Activated naive CD4-positive, alpha-beta T cell treated with anti-CD3 and anti-CD28 coated beads for 36 hours (primary cell): ENCODE measurements at regions of chr14 and their contacts with region 1.

Region 1: DNA sequence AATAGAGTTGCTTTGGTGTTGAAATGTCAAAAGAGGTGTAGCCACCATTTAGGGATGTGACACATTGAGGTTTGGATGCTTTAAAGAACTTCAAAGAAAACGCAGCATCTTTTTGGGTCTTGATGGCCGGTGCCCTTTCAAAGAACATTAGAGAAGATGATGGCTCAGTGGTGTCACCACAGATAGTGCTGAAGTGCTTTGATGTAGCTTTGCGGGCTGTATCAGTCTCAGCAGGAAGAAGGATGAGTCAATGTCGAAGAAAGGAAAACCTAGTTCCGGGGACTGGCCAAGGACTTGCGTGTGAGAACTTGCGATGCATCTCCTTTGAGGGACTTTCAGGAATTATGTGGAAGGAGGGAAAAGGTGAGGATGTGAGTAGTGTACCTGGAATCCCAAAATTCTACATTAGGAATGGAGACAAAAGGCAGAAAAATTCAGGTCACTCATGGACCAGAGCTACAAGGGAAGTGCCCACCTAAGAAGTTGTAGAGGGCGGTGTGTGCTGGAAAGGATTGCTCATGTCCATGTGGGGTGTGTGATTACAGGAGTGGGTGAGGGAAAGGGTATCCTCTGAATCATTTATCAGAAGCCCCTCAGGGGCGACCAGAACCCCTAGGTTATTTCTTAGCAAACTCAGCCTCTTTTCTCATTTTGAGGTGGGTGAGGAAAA is 39.7 kb upstream of the GZMB start:
- DNase-seq: peak; percentile 87
- H3K4me3 Mint-ChIP-seq: peak overlapping the region; percentile 60
- H3K27ac Mint-ChIP-seq: peak overlapping the region; percentile 96
- H3K4me1 Mint-ChIP-seq: peaks cover 80% of the 10 kb centered on the region
- H3K27me3 Mint-ChIP-seq: no peaks in the 10 kb centered on the region

Region 2: GRCh38 chr14:24259252-24259995 is 414.2 kb before region 1 on chr14:
- CTCF ChIA-PET with region 1: no interaction called
- intact Hi-C with region 1: no loop called
- DNase-seq: no peak
- H3K4me3 Mint-ChIP-seq: no peak overlapping the region
- H3K27ac Mint-ChIP-seq: no peak overlapping the region
- H3K4me1 Mint-ChIP-seq: no peaks in the 10 kb centered on the region
- H3K27me3 Mint-ChIP-seq: no peaks in the 10 kb centered on the region

Region 3: GRCh38 chr14:24366721-24367513 is 306.8 kb before region 1 on chr14:
- CTCF ChIA-PET with region 1: no interaction called
- intact Hi-C with region 1: loop called (anchors 5 kb)
- DNase-seq: peak; percentile 31
- H3K4me3 Mint-ChIP-seq: peak overlapping the region; percentile 71
- H3K27ac Mint-ChIP-seq: no peak overlapping the region
- H3K4me1 Mint-ChIP-seq: peaks cover 29% of the 10 kb centered on the region
- H3K27me3 Mint-ChIP-seq: peaks cover 41% of the 10 kb centered on the region

Region 4: GRCh38 chr14:24463017-24463883 is 210.4 kb before region 1 on chr14:
- CTCF ChIA-PET with region 1: no interaction called
- intact Hi-C with region 1: loop called (anchors 1 kb)
- DNase-seq: no peak
- H3K4me3 Mint-ChIP-seq: no peak overlapping the region
- H3K27ac Mint-ChIP-seq: peak overlapping the region; percentile 67
- H3K4me1 Mint-ChIP-seq: peaks cover 35% of the 10 kb centered on the region
- H3K27me3 Mint-ChIP-seq: no peaks in the 10 kb centered on the region

Region 5: DNA sequence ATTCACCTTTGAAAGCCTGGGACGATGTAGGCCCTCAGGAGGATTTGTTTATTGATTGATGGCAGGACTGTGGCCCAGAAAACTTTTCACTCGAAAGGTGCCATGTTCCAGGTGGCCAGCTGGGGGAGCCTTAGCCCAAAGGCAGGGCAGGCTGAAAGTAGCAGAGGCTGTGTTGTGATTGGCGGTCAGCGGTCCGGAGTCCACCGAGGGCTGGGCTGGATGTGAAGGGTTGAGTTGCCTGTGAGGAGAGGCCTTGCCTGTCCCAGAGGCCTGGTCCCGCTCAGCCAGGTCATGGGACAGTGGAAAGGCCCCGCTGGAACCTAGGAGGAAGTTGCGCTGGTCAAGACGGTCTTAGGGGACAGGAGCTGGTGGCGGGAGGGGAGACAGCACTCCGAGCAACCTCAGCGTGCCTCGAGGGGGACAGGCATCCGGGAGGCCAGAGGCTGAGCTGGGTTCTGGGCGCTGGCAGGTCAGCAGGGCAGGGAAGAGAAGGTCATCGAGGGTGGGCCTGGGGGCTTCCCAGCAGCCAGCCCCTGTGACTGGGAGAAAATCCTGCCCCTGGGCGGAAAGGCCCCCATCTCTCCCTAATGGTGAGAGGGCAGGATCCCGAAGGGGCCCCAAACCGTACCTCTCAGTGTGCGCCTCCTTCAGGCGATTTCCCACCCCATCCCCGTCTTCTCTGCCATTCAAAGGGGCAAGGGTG is 191.9 kb before region 1 on chr14:
- CTCF ChIA-PET with region 1: interaction called, 3 read pairs
- intact Hi-C with region 1: loop called (anchors 1 kb)
- DNase-seq: peak; percentile 80
- H3K4me3 Mint-ChIP-seq: peak overlapping the region; percentile 68
- H3K27ac Mint-ChIP-seq: peak overlapping the region; percentile 22
- H3K4me1 Mint-ChIP-seq: peaks cover 23% of the 10 kb centered on the region
- H3K27me3 Mint-ChIP-seq: no peaks in the 10 kb centered on the region

Region 6: DNA sequence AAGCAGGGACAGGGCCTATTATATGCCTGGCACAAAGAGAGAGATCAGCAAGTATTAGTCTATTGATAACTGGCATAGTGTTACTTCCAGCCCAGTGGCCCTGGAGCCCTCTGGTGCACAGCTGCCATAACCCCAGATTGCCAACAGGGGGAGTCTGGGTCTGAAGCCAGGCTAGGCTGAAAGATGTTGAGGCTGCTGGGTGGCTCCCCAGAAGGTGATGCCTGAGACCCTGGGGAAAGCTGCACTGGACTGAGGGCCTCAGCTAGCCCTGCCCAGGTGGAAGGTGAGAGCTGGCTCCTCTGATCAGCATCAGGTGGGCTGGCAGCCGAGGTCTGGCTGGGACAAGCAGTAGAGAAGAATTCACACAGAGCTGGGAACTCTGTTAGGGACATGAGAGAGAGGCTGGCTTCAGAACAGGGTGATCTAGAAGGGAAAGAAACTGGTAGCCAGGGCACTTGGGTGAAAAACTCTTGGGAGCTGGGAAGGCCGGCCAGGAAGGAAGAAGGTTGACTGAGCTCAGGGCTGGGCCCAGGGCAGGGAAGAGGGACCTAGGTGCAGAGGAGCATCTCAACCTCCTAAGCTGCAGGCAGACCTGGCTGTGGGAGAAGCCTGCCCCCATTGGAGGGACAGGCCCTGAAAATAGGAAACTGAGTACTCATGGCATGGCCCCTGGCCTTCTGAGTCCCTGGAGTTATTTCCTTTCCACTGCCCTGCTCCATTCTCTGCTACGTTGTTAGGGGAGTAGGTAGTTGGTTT is 68.1 kb before region 1 on chr14:
- CTCF ChIA-PET with region 1: interaction called, 11 read pairs
- intact Hi-C with region 1: loop called (anchors 1 kb)
- DNase-seq: peak; percentile 85
- H3K4me3 Mint-ChIP-seq: peak overlapping the region; percentile 76
- H3K27ac Mint-ChIP-seq: peak overlapping the region; percentile 76
- H3K4me1 Mint-ChIP-seq: peaks cover 31% of the 10 kb centered on the region
- H3K27me3 Mint-ChIP-seq: no peaks in the 10 kb centered on the region

Region 7: DNA sequence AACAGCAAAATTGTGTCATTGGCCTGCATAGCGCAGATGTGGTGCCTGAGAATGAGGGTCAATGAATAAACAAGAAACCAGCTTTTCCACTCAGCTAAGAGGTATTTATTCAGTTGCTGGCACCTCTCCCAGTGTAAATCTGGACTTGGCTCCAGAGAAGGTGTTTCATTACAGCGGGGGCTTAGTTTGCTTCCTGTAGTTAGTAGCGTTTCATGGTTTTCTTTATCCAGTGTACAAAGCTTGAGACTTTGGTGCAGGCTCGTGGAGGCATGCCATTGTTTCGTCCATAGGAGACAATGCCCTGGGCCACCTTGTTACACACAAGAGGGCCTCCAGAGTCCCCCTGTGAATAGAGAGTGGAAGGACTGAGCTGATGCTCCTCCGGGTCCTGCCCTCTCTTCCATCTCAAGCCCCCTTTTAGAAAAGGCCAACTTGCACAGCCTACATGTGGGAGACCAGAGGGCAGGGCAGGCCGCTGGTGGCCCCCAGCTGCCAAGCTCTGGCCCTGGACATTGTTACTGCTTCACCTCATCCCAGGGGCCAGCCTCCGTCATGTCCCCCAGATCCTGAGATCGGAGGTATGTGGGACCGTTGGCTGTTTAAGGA is 42.7 kb before region 1 on chr14:
- CTCF ChIA-PET with region 1: no interaction called
- intact Hi-C with region 1: loop called (anchors 1 kb)
- DNase-seq: no peak
- H3K4me3 Mint-ChIP-seq: no peak overlapping the region
- H3K27ac Mint-ChIP-seq: no peak overlapping the region
- H3K4me1 Mint-ChIP-seq: peaks cover 4% of the 10 kb centered on the region
- H3K27me3 Mint-ChIP-seq: no peaks in the 10 kb centered on the region

Region 8: DNA sequence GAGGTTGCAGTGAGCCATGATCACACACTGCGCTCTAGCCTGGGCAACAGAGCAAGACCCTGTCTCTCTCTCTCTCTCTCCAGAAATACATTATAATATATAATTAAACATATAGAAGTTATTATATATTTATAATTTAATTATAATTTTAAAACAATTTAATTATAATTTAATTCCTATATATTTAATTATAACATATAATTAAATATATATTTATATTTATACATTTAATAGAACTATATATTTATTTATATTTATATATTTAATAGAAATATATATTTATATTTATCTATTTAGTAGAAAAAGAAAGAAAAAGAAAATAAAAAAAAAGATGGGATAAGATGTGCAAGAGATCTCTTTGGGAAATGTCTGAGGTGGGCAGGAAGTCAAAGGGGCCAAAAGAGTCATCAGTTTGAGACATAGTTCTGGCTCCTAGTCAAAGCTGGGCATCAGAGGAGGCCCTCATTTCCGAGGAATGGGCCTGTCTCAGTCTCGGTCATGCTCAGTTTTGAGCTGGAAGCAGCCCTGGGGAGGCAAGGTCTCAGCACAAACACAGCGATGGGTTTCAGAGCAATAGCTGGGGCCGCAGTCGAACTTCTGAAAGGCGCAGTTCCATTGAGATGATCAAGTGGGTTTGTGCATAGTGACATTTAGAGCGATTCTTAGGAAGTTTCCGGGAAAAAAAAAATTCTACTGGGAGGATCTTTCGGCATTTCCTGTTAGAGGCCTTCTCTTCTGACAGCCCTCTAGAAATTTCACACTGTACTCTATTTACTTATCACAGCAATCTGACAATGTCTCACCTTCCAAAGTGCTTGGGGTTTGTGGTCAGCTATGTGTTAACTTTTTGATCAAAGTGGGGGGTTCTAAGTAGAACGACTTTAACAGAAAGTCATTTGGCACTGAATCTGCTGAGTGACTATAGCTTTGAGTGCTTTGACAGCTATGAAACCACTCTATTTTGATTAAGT is 19.0 kb after region 1 on chr14:
- CTCF ChIA-PET with region 1: interaction called, 3 read pairs
- intact Hi-C with region 1: loop called (anchors 1 kb)
- DNase-seq: peak; percentile 55
- H3K4me3 Mint-ChIP-seq: no peak overlapping the region
- H3K27ac Mint-ChIP-seq: peak overlapping the region; percentile 73
- H3K4me1 Mint-ChIP-seq: peaks cover 13% of the 10 kb centered on the region
- H3K27me3 Mint-ChIP-seq: peaks cover 3% of the 10 kb centered on the region